Endothelial cell of umbilical vein (primary cell): ENCODE measurements at regions of chr5 and their contacts with region 1.

Region 1: DNA sequence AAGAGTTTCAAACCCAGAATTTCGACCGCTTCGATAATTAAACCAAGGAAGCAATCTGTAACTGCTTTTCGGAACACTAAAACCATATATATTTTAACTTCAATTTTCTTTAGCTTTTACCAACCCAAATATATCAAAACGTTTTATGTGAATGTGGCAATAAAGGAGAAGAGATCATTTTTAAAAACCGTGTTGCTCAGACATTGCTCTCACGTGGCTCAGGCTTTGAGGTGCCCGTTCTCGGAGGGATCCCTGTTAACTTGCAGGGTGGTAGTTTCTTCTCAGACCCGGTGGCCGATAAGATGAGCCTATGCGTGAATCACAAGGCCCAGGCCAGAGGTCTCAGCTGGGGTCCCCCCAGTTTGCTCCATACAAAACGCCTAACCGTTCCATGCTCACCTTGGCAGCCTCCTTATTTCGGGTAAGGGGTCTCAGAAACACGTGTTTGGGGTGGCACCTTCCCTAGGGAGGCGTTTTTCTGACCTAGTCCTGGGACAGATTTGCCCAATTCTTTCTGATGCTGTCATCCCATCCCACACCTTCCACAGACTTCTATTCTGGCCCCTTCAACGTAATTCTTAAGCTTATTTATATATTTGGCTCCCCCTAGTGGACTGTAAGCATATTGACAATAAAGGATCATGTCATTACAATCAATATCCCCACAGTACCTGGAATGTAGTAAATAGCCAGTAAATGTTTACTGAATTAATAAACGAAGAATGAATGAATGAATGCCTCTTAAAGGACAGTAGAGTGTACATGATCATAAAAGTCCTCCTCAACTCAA is 48.1 kb downstream of the THBS4 start:
- DNase-seq: peak; percentile 64
- H3K4me3 ChIP-seq: peak overlapping the region in 1 of 3 experiments; percentile 23
- H3K27ac ChIP-seq: no peak overlapping the region
- H3K4me1 ChIP-seq: no peaks in the 10 kb centered on the region
- H3K27me3 ChIP-seq: no peaks in the 10 kb centered on the region
- CTCF ChIP-seq: peak; percentile 45 to 51
- POLR2A ChIP-seq: no peak

Region 2: DNA sequence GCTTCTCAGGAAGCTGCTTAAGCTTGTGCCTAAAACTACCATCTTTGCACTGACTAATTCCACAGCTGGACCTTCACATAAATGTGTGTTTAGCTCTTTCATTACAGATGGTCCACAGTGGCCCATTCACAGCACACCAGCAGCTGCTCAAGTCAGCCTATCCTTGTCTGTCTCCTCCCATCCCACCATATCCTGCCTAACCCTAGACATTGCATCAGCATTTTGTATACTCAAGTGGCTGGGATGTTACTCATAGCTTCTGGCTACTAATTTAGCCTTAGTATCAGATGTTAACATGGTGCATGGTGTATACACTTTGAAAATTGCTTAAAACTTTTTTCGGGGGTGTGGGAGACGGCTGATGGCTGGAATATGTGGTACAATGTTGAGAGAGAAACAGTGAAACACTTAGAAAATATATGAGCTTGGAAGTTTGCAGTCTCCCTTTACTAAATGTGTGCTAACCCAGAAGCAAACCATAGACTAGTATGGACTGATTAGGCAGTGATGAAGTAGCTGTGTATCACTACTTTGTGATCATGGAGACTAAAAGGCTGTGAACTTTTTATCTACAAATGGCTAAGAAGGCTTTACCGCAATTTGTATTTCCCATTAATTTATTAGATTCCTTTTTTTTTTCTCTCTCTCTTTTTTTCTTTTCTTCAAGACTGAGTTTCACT is 764.2 kb before region 1 on chr5:
- CTCF ChIA-PET with region 1: no interaction called
- POLR2A ChIA-PET with region 1: no interaction called
- dilution Hi-C with region 1: no loop called
- intact Hi-C with region 1: no loop called
- DNase-seq: peak; percentile 14
- H3K4me3 ChIP-seq: no peak overlapping the region
- H3K27ac ChIP-seq: no peak overlapping the region
- H3K4me1 ChIP-seq: no peaks in the 10 kb centered on the region
- H3K27me3 ChIP-seq: no peaks in the 10 kb centered on the region
- CTCF ChIP-seq: no peak
- POLR2A ChIP-seq: no peak

Region 3: DNA sequence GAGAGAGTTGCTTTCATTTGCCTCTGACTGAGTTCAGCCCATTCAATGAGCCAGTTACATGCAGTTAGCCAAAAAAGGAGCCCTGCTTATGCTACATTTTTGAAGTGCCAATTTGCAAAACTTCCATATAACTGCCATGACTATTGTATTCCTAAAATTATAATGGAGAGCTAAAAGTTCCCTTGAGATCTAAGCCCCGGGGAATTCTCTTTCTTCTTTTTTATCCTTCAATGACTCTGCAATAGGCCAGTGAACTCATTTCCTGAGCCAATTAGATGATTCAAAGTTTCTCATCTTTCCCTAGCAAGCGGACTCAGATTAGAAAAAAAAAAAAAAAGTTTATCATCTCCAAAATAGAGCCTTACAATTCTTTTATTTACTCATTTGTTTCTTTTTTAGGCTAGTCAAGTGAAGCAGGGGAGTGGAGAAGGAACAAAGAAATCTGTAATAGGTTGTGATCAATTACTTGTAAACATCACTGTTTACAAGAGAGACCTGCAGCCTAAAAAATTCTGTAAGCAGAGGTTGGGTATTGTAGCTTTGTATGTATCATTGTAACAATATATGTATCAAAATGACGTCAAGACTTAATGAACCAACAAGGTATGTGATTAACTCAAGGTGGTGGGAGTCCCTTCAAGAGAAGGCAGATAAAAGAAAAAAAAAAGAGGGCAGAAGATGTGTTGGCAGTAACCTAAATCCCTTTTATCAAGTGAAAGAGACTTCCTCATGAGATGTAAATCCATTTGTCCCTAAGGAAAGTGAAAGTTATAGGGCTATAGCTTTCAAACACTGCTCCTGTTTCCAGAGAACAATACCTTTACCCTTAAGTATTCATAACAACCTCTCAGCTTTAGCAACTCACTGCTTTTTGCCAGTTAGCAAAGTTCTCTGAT is 520.7 kb before region 1 on chr5:
- CTCF ChIA-PET with region 1: interaction called, 10 read pairs
- POLR2A ChIA-PET with region 1: no interaction called
- dilution Hi-C with region 1: no loop called
- intact Hi-C with region 1: no loop called
- DNase-seq: no peak
- H3K4me3 ChIP-seq: no peak overlapping the region
- H3K27ac ChIP-seq: no peak overlapping the region
- H3K4me1 ChIP-seq: no peaks in the 10 kb centered on the region
- H3K27me3 ChIP-seq: no peaks in the 10 kb centered on the region
- CTCF ChIP-seq: no peak
- POLR2A ChIP-seq: no peak

Region 4: GRCh38 chr5:79793722-79794121 is 289.6 kb before region 1 on chr5:
- CTCF ChIA-PET with region 1: no interaction called
- POLR2A ChIA-PET with region 1: no interaction called
- dilution Hi-C with region 1: no loop called
- intact Hi-C with region 1: no loop called
- DNase-seq: no peak
- H3K4me3 ChIP-seq: no peak overlapping the region
- H3K27ac ChIP-seq: no peak overlapping the region
- H3K4me1 ChIP-seq: no peaks in the 10 kb centered on the region
- H3K27me3 ChIP-seq: no peaks in the 10 kb centered on the region
- CTCF ChIP-seq: no peak
- POLR2A ChIP-seq: no peak

Region 5: DNA sequence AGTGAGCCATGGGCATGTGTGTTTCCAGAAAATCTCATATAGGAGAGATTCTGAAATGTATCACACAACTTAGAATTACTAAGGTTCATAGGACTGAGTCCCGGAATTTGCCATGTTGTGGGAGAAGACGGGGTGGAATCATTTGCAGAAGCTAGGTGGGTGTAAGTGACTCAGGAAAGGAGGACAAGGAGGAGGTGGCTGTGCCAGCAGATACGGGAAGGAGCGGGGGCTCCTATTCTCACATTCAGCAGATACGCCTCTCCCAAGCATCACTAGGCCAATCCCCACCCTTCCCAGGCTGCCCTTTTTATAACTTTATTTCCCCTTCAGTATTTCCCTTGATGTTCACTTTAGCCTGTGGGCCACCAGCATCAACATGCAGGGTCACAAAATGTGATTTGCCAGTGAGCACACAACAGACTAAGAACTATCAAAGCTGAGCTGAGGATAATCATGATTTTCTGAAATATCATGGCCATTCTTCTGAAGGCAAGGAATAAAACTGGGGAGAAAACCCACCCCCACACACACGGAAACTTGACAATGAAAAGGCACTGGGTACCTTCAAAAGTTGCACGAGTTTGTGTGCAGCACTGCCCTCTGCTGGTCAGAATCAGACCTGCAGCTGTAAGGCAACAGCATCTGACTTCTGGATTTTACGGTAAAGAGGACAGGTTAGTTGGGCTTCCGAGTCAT is 225.4 kb before region 1 on chr5:
- CTCF ChIA-PET with region 1: interaction called, 8 read pairs
- POLR2A ChIA-PET with region 1: no interaction called
- dilution Hi-C with region 1: no loop called
- intact Hi-C with region 1: loop called (anchors 5 kb)
- DNase-seq: peak; percentile 66
- H3K4me3 ChIP-seq: no peak overlapping the region
- H3K27ac ChIP-seq: no peak overlapping the region
- H3K4me1 ChIP-seq: no peaks in the 10 kb centered on the region
- H3K27me3 ChIP-seq: no peaks in the 10 kb centered on the region
- CTCF ChIP-seq: peak; percentile 92 to 94
- POLR2A ChIP-seq: no peak

Region 6: GRCh38 chr5:79924936-79925893 is 158.1 kb before region 1 on chr5:
- CTCF ChIA-PET with region 1: interaction called, 23 read pairs
- POLR2A ChIA-PET with region 1: no interaction called
- dilution Hi-C with region 1: no loop called
- intact Hi-C with region 1: no loop called
- DNase-seq: no peak
- H3K4me3 ChIP-seq: no peak overlapping the region
- H3K27ac ChIP-seq: no peak overlapping the region
- H3K4me1 ChIP-seq: no peaks in the 10 kb centered on the region
- H3K27me3 ChIP-seq: peaks cover 0 to 2% of the 10 kb centered on the region in 2 experiments
- CTCF ChIP-seq: no peak
- POLR2A ChIP-seq: no peak

Region 7: DNA sequence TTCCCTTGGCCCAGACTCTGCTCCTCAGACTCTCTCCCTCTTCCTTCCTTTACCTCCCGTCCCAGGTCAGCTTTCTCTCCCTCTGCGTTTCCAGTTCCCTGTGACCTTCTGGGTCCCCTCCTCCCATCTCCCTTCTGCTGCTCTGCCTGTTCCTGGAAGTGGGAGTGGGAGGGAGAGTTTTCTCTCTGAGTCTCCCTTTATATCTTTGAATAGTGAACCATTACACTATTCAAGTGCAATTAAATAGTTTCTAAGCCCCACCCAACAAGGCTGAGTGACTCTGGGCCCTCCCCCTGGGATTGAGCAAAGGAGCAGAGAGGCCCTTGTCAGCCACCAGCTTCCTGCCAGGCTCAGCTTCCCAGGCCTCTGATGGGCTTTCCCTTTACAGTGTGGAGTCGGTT is 13.4 kb before region 1 on chr5:
- CTCF ChIA-PET with region 1: interaction called, 16 read pairs
- POLR2A ChIA-PET with region 1: no interaction called
- dilution Hi-C with region 1: no loop called
- intact Hi-C with region 1: no loop called
- DNase-seq: no peak
- H3K4me3 ChIP-seq: no peak overlapping the region
- H3K27ac ChIP-seq: no peak overlapping the region
- H3K4me1 ChIP-seq: no peaks in the 10 kb centered on the region
- H3K27me3 ChIP-seq: no peaks in the 10 kb centered on the region
- CTCF ChIP-seq: no peak
- POLR2A ChIP-seq: no peak

Region 8: GRCh38 chr5:80255732-80256479 is 172.6 kb after region 1 on chr5 and contains the start of gene SERINC5:
- CTCF ChIA-PET with region 1: interaction called, 31 read pairs
- POLR2A ChIA-PET with region 1: no interaction called
- dilution Hi-C with region 1: no loop called
- intact Hi-C with region 1: no loop called
- DNase-seq: peak; percentile 79
- H3K4me3 ChIP-seq: peak within 1 kb of the TSS; percentile 64 to 85 (median 70)
- H3K27ac ChIP-seq: peak within 1 kb of the TSS; percentile 65
- H3K4me1 ChIP-seq: peaks cover 7% of the 10 kb centered on the region
- H3K27me3 ChIP-seq: no peaks in the 10 kb centered on the region
- CTCF ChIP-seq: peak in 1 of 2 donors; percentile 3
- POLR2A ChIP-seq: peak; percentile 96
- total RNA-seq, gene SERINC5: 9.9 and 10.1 TPM in 2 replicates